ENCODE measurements at regions of chr7 and their contacts with region 1.

Region 1: DNA sequence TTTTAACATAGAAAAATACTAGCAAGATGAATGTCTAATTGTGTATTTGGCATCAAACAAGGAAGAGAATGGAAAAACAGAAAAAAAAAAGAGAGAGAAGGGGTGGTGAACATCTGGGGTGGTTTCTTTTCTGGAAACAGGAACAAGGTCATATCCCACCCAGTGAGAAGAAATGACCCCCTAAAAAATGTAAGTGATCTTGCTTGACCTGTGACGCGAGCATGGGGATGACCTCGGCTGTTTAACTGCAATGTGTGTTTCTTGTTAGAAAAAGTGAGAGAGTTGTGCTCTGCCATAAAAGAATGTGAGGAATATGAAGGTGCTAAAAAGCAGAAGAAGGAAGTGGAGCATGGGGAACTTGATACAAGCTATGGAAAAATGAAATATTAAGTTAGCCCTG is 258.5 kb downstream of the AGMO start:
- DNase-seq: no peak

Region 2: GRCh38 chr7:15720849-15721471 is 417.6 kb after region 1 on chr7:
- intact Hi-C with region 1: loop called (anchors 5 kb)
- DNase-seq: peak in 3 of 10 donors; percentile 13 to 40 (median 30)

Region 3: DNA sequence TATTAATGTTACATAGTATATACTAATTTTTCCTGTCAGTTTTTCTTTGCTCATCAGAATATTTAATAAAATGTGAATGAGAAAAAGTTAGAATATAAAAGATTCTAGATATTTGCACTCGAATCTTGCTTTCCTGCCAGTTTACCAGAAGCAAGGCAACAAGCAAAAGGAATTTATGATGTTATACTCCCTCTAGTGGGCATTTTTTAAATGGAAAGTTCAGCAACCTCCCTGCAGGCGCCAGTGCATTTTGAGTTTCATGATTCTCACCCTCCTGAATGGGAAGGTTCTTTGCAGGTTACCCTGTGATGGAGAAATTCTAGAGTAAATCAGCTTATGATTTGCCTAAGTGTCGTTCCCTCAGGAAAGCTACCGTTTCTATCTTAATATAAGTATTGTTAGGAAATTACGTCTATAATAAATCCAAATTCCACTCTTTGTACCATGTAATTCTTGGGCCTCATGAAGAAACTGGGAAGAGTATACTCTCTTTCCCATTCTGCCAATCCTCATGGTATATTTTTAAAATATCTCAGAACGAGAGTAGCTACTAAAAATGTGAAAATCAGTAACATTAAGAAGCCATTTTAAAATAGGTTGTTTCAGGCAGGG is 768.0 kb after region 1 on chr7:
- intact Hi-C with region 1: loop called (anchors 5 kb)
- DNase-seq: no peak